ENCODE measurements at regions of chr10 and their contacts with region 1.

Region 1: DNA sequence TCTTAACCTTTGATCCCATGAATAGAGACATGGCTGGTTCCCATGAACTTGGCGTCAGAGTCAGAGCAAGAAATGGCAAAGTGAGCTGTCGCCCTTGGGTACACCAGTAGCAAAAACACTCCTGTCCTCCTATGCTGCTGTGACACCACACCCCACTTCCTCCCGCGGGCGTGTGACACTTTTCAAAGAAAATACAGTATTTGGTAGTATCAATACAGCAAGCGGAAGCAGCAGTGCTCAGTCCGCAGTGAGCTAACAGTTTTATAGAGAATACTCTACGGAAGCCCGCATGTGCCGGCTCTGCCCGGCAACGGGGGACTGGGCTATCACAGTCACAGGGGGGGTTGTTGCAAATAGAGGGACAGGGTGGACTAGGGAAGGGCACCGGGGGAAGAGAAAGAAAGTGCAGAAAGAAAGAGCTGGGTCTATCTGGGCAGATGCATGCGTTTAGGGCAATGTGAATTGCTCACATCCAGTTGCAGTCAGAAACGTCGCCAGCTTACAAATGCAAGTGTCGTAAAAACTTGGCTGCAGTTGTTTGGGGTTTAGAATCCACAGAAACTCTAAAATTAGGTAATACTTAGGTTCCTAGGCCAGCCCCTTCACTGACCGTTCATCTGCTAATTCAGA is 49.8 kb downstream of the PRKCQ start:
- DNase-seq: peak; percentile 42 to 89 (median 76)
- ATAC-seq: peak; percentile 96 to 97
- H3K4me3 Mint-ChIP-seq: peak overlapping the region; percentile 75 to 99 (median 92)
- H3K27ac Mint-ChIP-seq: peak overlapping the region; percentile 95 to 100 (median 98)
- H3K4me1 Mint-ChIP-seq: peaks cover 50 to 89% (median 85%) of the 10 kb centered on the region in 4 donors
- H3K27me3 Mint-ChIP-seq: no peaks in the 10 kb centered on the region

Region 2: GRCh38 chr10:6328699-6329423 is 201.5 kb before region 1 on chr10:
- POLR2A ChIA-PET with region 1: no interaction called
- DNase-seq: peak in 1 of 10 donors; percentile 24
- ATAC-seq: no peak
- H3K4me3 Mint-ChIP-seq: no peak overlapping the region
- H3K27ac Mint-ChIP-seq: peak overlapping the region in 2 of 10 donors; percentile 51 to 65
- H3K4me1 Mint-ChIP-seq: peaks cover 0 to 13% (median 5%) of the 10 kb centered on the region in 4 donors
- H3K27me3 Mint-ChIP-seq: no peaks in the 10 kb centered on the region

Region 3: GRCh38 chr10:6504296-6504695 is 26.0 kb before region 1 on chr10:
- POLR2A ChIA-PET with region 1: no interaction called
- DNase-seq: no peak
- ATAC-seq: no peak
- H3K4me3 Mint-ChIP-seq: peak overlapping the region in 1 of 10 donors; percentile 5
- H3K27ac Mint-ChIP-seq: peak overlapping the region in 9 of 10 donors; percentile 14 to 87 (median 56)
- H3K4me1 Mint-ChIP-seq: peaks cover 25 to 47% (median 40%) of the 10 kb centered on the region in 4 donors
- H3K27me3 Mint-ChIP-seq: no peaks in the 10 kb centered on the region

Region 4: DNA sequence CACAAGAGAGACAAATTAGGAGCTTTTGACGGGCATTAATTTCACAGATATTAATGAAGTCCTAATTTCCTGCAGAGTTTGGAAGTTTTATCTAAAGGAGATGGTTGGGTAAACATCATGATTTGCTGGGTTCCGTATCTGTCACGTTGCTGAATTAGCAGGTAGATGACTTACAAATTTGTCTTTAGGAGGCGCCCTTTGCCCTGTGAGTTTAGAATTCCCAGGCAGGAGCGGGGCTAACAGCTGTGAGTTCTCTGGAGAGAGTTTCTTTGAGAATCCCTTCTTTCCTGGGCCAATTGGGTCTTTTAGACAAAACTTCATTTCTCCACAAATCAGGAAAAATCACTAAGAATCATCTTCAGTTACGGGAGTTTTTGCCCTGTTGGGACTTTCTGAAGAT is 14.0 kb before region 1 on chr10:
- POLR2A ChIA-PET with region 1: interaction called, 24 read pairs
- DNase-seq: no peak
- ATAC-seq: no peak
- H3K4me3 Mint-ChIP-seq: peak overlapping the region in 2 of 10 donors; percentile 46 to 53
- H3K27ac Mint-ChIP-seq: peak overlapping the region; percentile 23 to 82 (median 62)
- H3K4me1 Mint-ChIP-seq: peaks cover 47 to 89% (median 84%) of the 10 kb centered on the region in 4 donors
- H3K27me3 Mint-ChIP-seq: no peaks in the 10 kb centered on the region

Region 5: DNA sequence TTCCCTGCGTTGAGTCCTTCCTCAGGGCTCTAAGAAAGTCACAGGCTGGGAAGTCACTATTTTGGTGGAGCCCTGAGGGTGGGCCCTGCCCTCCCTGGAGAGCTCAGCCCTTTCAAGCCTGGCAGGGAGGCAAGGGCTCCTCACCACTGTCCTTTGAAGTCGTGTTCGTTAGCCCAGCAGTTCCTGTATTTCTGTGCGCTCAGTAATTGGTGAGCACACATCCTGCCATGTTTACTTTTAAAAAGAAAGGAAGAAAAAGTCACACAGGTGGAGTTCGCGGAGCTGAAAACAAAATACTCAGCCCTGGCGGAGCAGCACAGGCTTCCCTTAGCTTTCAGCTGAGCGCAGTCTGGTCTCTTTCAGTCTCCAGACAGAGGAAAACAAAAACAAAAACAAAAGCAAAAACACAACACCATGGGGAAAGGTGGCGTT is 12.7 kb after region 1 on chr10:
- POLR2A ChIA-PET with region 1: interaction called, 95 read pairs
- DNase-seq: peak in 9 of 10 donors; percentile 32 to 82 (median 65)
- ATAC-seq: peak; percentile 88 to 90
- H3K4me3 Mint-ChIP-seq: peak overlapping the region; percentile 83 to 98 (median 94)
- H3K27ac Mint-ChIP-seq: peak overlapping the region; percentile 95 to 100 (median 99)
- H3K4me1 Mint-ChIP-seq: peaks cover 42 to 84% (median 80%) of the 10 kb centered on the region in 4 donors
- H3K27me3 Mint-ChIP-seq: no peaks in the 10 kb centered on the region

Region 6: GRCh38 chr10:6563075-6563474 is 32.7 kb after region 1 on chr10:
- POLR2A ChIA-PET with region 1: interaction called, 10 read pairs
- DNase-seq: no peak
- ATAC-seq: peak; percentile 67 to 78
- H3K4me3 Mint-ChIP-seq: peak overlapping the region; percentile 55 to 86 (median 76)
- H3K27ac Mint-ChIP-seq: peak overlapping the region; percentile 76 to 95 (median 91)
- H3K4me1 Mint-ChIP-seq: peaks cover 46 to 96% (median 93%) of the 10 kb centered on the region in 4 donors
- H3K27me3 Mint-ChIP-seq: no peaks in the 10 kb centered on the region

Region 7: GRCh38 chr10:6593241-6593671 is 62.9 kb after region 1 on chr10:
- POLR2A ChIA-PET with region 1: interaction called, 14 read pairs
- DNase-seq: peak in 3 of 10 donors; percentile 32 to 42 (median 40)
- ATAC-seq: peak; percentile 30 to 43
- H3K4me3 Mint-ChIP-seq: peak overlapping the region; percentile 49 to 90 (median 79)
- H3K27ac Mint-ChIP-seq: peak overlapping the region; percentile 96 to 99 (median 98)
- H3K4me1 Mint-ChIP-seq: peaks cover 41 to 94% (median 92%) of the 10 kb centered on the region in 4 donors
- H3K27me3 Mint-ChIP-seq: no peaks in the 10 kb centered on the region